ENCODE measurements at regions of chr17 and their contacts with region 1.

Region 1: DNA sequence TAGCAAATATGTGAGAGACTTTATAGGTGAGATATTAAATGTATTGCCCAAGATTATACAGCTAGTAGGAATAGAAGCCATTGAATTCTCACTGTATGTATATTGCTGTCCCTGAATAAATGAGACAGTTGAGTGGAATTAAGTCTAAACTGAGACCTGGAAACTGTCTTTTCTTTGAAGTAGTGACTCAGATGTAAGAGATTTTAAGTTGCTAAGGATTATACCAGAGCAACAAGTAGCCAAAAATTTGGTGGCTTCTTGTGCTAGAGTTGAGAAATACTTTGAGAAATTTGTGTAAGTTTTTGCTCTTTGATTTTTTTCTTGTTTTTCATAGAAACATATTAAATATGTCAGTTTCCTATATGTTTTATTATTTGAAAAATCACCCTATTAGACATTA is 58.7 kb downstream of the TANC2 start:
- DNase-seq: no peak
- CTCF ChIP-seq: no peak

Region 2: GRCh38 chr17:62916681-62917571 is 107.8 kb before region 1 on chr17:
- in situ Hi-C with region 1: loop called (anchors 25 kb)
- DNase-seq: no peak
- CTCF ChIP-seq: no peak

Region 3: DNA sequence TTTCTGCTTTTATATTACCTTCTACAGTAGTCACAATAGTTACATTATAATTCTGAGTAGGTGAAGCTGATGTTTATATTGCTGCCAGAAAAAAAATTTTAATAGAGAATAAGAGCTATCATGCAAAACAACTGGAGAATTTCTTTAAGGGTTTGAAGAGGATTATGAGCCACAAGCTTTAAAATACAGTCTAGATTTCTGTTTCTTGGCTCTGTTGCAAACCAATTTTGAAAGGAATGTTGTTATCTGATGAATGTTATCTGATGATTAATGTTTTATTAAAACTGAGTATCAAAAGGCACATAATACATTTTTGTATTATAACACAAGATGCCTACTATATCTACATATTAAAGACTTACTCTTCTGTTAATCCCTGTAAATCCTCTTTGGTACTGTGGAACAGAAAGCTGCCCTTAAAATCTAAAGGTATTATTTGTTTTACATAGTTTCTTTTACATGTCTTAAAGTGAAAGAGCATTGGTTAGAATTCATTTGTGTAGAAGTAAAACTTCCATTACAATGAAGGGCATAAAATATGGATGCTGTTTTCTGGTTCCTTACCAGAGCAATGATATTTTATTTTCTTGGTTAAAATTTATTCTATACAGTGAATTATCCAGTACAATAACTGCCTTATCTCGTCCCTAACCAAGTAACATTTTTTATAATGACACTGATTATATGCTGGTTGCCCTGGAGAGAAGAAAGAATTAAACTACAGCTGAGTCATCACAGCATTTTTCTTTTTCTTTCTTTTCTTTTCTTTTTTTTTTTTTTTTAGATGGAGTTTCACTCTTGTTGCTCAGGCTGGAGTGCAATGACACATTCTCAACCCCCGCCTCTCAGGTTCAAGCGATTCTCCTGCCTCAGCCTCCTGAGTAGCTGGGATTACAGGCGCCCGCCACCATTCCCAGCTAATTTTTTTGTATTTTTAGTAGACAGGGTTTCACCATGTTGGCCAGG is 147.0 kb after region 1 on chr17:
- in situ Hi-C with region 1: no loop called
- DNase-seq: no peak
- CTCF ChIP-seq: no peak